RWPE1 (cell line): ENCODE measurements at regions of chr11 and their contacts with region 1.

Region 1: GRCh38 chr11:79845002-79845709 is 404.3 kb upstream of the TENM4 start:
- DNase-seq: no peak
- H3K27ac ChIP-seq: no peak overlapping the region
- CTCF ChIP-seq: no peak

Region 2: DNA sequence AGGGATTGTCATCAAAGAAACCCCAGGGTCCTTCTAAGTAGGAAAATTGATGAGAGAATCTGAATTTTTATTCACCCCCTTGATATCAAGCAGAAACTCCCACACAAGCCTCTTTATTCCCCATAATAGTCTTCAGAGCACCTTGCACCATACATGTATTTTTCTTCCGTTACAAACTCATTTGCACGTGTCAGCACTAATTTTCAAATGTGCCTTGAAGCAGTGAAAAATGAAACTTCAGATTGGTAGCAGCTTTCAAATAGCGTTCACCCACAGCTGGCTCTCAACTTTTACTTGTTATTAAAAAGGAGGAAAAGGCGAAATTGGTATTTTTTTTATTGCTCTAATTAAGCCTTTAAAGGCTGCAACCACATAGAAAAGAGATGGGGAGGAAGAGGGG is 61.3 kb before region 1 on chr11:
- CTCF ChIA-PET with region 1: no interaction called
- POLR2A ChIA-PET with region 1: no interaction called
- DNase-seq: no peak
- H3K27ac ChIP-seq: no peak overlapping the region
- CTCF ChIP-seq: no peak

Region 3: GRCh38 chr11:80118073-80118472 is 272.9 kb after region 1 on chr11:
- CTCF ChIA-PET with region 1: interaction called, 10 read pairs
- POLR2A ChIA-PET with region 1: no interaction called
- DNase-seq: no peak
- H3K27ac ChIP-seq: no peak overlapping the region
- CTCF ChIP-seq: no peak